Spleen (tissue), 13 donors: ENCODE measurements at regions of chr5 and their contacts with region 1.

Region 1: GRCh38 chr5:112146323-112147226 is 272.5 kb downstream of the EPB41L4A start:
- DNase-seq: no peak
- H3K4me3 ChIP-seq: no peak overlapping the region
- H3K27ac ChIP-seq: no peak overlapping the region
- H3K4me1 ChIP-seq: no peaks in the 10 kb centered on the region
- H3K27me3 ChIP-seq: no peaks in the 10 kb centered on the region
- CTCF ChIP-seq: peak; percentile 37 to 85 (median 76)
- POLR2A ChIP-seq: no peak

Region 2: DNA sequence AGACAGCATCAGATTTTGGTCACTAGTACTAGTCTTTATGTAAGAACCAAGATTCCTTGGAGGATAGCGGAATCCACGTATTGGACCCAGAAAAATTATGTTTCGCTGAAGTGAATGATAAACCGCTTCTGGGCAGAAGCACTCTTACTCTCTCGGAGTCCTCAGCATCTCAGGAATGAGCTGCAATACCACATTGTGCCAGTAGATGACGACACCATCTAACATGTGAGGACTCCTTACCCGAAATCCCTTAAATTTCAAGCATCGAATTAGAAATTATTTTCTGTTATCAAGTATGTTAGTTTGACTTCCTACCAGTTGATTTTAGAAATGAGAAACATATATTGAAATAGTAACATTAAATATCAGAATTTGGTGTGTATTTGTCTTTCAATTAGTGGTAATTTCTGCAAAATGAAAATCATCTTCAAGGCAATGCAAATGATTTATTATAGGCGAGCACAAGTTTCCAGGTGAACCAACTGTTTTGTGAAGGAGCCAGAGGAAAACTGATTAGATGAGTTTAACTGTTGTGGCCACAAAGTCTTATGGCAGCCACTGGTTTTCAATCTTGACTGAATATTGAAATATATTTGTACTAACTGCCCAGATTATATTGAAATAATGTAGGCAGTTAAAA is 988.4 kb before region 1 on chr5:
- intact Hi-C with region 1: loop called (anchors 5 kb)
- DNase-seq: no peak
- H3K4me3 ChIP-seq: no peak overlapping the region
- H3K27ac ChIP-seq: no peak overlapping the region
- H3K4me1 ChIP-seq: peaks cover 0 to 6% (median 5%) of the 10 kb centered on the region in 6 donors
- H3K27me3 ChIP-seq: no peaks in the 10 kb centered on the region
- CTCF ChIP-seq: peak; percentile 81 to 97 (median 91)
- POLR2A ChIP-seq: no peak

Region 3: DNA sequence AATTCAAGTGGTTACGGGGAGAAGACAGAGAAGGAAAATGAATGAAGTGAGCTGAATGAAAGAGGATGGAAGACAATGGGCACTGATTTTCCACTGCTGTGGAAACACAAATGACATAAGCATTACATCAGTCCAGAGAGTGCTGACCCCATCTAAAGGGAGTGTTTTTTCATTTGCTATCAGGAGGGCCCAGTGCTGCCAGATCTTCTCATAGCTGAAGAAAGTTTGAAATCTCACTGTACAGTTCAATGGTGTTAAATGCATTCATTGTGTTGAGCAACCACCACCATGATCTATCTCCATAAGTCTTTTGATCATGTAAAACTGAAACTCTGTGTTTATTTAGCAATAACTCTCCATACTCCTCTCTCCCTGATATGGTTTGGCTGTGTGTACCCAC is 592.7 kb before region 1 on chr5:
- intact Hi-C with region 1: loop called (anchors 2 kb)
- DNase-seq: no peak
- H3K4me3 ChIP-seq: no peak overlapping the region
- H3K27ac ChIP-seq: no peak overlapping the region
- H3K4me1 ChIP-seq: peaks cover 0 to 22% (median 16%) of the 10 kb centered on the region in 6 donors
- H3K27me3 ChIP-seq: no peaks in the 10 kb centered on the region
- CTCF ChIP-seq: no peak
- POLR2A ChIP-seq: no peak

Region 4: DNA sequence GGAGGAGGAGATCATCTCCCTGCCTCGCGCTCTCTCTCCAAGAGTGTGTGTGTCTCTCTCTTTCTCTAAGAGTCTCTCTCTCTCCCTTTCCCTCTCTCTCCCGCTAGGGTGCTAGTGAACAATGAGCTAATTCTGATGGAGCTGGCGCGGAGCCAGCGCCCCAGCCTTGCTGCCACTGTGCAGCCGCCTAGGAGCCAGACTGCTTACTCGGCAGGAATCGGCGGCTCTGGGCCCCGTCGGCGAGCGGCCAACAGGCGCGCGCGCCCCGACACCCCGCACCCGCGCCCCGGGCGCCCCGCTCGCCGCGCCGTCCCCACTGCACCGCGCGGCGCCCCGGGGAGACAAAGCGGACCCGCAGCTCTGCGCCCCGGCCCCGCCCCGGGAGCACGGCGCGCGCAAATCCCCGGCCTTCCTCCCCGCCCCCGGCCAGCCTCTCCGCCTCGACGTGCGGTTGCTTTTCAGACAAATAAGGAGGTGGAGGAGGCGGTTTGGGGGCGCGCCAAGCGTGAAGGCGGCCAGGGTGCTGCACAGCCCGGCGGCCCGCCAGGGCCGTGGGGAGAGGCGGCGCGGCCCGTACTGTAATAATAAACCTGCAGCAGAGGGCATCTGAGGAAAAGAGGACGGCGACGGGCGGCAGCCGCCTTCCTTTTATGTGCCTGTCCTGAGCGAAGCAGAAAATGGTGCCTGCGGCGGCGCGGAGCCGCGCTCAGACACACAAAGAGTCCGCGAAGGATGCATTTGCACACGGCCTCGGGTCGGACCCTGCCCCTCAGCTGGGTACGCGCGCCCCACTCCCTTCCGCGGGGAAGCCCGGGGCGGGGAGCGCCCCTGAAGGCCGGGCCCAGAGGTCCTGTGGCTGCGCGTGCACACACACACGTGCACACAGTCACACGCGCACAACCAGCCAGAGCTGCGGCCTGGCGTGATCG is 389.0 kb before region 1 on chr5:
- intact Hi-C with region 1: loop called (anchors 10 kb)
- DNase-seq: peak; percentile 94
- H3K4me3 ChIP-seq: peak overlapping the region; percentile 55 to 87 (median 62)
- H3K27ac ChIP-seq: peak overlapping the region; percentile 83 to 93 (median 90)
- H3K4me1 ChIP-seq: peaks cover 0 to 42% (median 30%) of the 10 kb centered on the region in 6 donors
- H3K27me3 ChIP-seq: peaks cover 0 to 7% (median 0%) of the 10 kb centered on the region in 7 donors
- CTCF ChIP-seq: peak in 6 of 11 experiments; percentile 16 to 49 (median 22)
- POLR2A ChIP-seq: no peak